A549 (cell line): ENCODE measurements at regions of chr9 and their contacts with region 1.

Region 1: GRCh38 chr9:130866474-130866965 is 30.1 kb downstream of the QRFP start:
- DNase-seq: peak; percentile 79 to 93
- ATAC-seq: peak; percentile 97
- H3K4me3 ChIP-seq: no peak overlapping the region
- H3K27ac ChIP-seq: no peak overlapping the region
- H3K4me1 ChIP-seq: no peaks in the 10 kb centered on the region
- CTCF ChIP-seq: peak; percentile 95
- EP300 ChIP-seq: no peak
- POLR2A ChIP-seq: no peak
- RAD21 ChIP-seq: peak; percentile 76 to 78

Region 2: GRCh38 chr9:130058154-130058553 is 808.4 kb before region 1 on chr9:
- CTCF ChIA-PET with region 1: no interaction called
- POLR2A ChIA-PET with region 1: no interaction called
- DNase-seq: peak; percentile 35 to 71
- ATAC-seq: peak in 1 of 2 experiments; percentile 52; a peak in 3 of 6 replicates
- H3K4me3 ChIP-seq: no peak overlapping the region
- H3K27ac ChIP-seq: no peak overlapping the region
- H3K4me1 ChIP-seq: peaks cover 4% of the 10 kb centered on the region; the same call in 1 of the 3 replicates
- CTCF ChIP-seq: no peak
- EP300 ChIP-seq: no peak
- POLR2A ChIP-seq: no peak
- RAD21 ChIP-seq: no peak

Region 3: GRCh38 chr9:130701056-130702022 is 165.2 kb before region 1 on chr9:
- CTCF ChIA-PET with region 1: interaction called, 176 read pairs
- POLR2A ChIA-PET with region 1: interaction called, 3 read pairs
- DNase-seq: peak; percentile 71 to 74
- ATAC-seq: peak; percentile 94 to 98
- H3K4me3 ChIP-seq: no peak overlapping the region
- H3K27ac ChIP-seq: no peak overlapping the region
- H3K4me1 ChIP-seq: no peaks in the 10 kb centered on the region
- CTCF ChIP-seq: peak; percentile 87
- EP300 ChIP-seq: no peak
- POLR2A ChIP-seq: no peak
- RAD21 ChIP-seq: peak; percentile 50 to 57; a peak in 4 of 5 replicates

Region 4: DNA sequence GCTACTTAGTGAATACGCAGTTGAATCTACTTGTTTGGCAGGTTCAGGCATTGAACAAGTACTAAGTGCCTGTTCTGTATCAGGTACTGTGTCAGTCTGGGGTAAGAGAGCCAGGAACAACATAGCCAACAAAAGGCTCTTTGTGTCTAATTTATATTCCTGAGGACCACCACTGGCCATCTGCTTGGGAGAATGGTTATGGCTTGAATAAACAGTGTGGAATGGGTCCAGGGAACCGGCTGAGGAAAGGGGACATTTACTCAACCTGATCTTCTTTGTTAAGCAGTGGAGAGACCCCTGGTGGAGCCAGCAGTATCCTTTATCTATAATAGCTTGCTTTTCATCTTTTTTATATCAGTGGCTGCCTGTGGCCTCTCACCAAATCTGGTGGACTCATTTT is 134.4 kb before region 1 on chr9:
- CTCF ChIA-PET with region 1: interaction called, 14 read pairs
- POLR2A ChIA-PET with region 1: no interaction called
- DNase-seq: peak in 1 of 2 experiments; percentile 40
- ATAC-seq: peak; percentile 66 to 80; a peak in 5 of 6 replicates
- H3K4me3 ChIP-seq: no peak overlapping the region
- H3K27ac ChIP-seq: peak overlapping the region; percentile 41 to 53; a peak in 1 of 6 replicates
- H3K4me1 ChIP-seq: peaks cover 25% of the 10 kb centered on the region
- CTCF ChIP-seq: peak; percentile 36; the same call in 2 of the 3 replicates
- EP300 ChIP-seq: no peak
- POLR2A ChIP-seq: no peak
- RAD21 ChIP-seq: 0 out of 5 replicates have a peak, but pooled peaks of 1 of the 2 experiments have one; percentile 11

Region 5: GRCh38 chr9:130834371-130835311 is 31.9 kb before region 1 on chr9 and contains the start of gene ABL1:
- CTCF ChIA-PET with region 1: interaction called, 397 read pairs
- POLR2A ChIA-PET with region 1: no interaction called
- DNase-seq: peak; percentile 82 to 85
- ATAC-seq: peak; percentile 84 to 92
- H3K4me3 ChIP-seq: peak within 1 kb of the TSS; percentile 63
- H3K27ac ChIP-seq: peak within 1 kb of the TSS; percentile 94 to 98
- H3K4me1 ChIP-seq: peaks cover 43% of the 10 kb centered on the region
- CTCF ChIP-seq: no peak; the same call in 2 of the 3 replicates
- EP300 ChIP-seq: no peak
- POLR2A ChIP-seq: peak; percentile 15
- RAD21 ChIP-seq: no peak; a peak in 1 of 5 replicates
- polyA plus RNA-seq, gene ABL1: 26.5 and 37.5 TPM in 2 replicates

Region 6: GRCh38 chr9:130927995-130928900 is 61.7 kb after region 1 on chr9:
- CTCF ChIA-PET with region 1: interaction called, 41 read pairs
- POLR2A ChIA-PET with region 1: no interaction called
- DNase-seq: peak; percentile 81 to 83
- ATAC-seq: peak; percentile 60 to 72
- H3K4me3 ChIP-seq: peak overlapping the region; percentile 18; the same call in 2 of the 3 replicates
- H3K27ac ChIP-seq: peak overlapping the region; percentile 82 to 93
- H3K4me1 ChIP-seq: peaks cover 38% of the 10 kb centered on the region
- CTCF ChIP-seq: no peak
- EP300 ChIP-seq: no peak
- POLR2A ChIP-seq: no peak
- RAD21 ChIP-seq: no peak

Region 7: DNA sequence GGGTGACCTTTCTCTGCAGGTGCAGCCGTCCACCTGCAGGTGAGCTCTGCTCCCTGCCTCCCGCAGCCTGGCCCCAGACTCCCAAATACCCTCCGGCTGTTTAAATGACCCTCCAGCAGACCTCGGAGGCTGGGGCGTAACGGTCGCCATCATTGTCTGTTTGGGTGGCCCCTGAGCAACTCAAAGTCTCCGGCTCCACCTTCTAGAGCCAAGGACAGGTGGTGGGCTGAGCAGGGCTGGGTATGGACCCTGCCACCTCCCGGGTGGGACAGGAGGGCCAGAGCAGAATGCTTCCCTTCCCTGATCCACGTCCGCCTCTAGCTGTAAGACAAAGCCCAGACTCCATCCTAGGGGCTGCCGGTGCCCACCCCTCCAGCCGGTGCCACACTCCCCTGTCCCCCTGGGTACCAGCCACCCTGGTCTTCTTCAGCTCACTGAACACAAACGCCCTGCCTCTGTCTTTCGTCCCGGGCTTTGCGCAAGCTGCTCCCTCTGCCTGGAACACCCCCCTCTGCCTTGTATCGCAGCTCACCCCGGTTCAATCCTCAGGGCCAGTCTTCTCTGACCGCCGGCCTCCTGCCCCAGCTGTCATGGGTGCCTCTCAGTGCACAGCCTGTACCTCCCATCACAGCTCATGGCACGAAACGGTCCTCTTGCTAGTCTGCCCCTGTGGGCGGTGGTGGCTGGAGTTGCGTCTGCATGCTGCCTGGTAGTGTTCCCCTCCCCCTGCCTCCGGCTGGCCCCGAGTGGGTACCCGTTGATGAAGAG is 106.8 kb after region 1 on chr9:
- CTCF ChIA-PET with region 1: interaction called, 10 read pairs
- POLR2A ChIA-PET with region 1: no interaction called
- DNase-seq: no peak
- ATAC-seq: peak; percentile 28 to 31
- H3K4me3 ChIP-seq: no peak overlapping the region
- H3K27ac ChIP-seq: no peak overlapping the region
- H3K4me1 ChIP-seq: no peaks in the 10 kb centered on the region
- CTCF ChIP-seq: no peak
- EP300 ChIP-seq: no peak
- POLR2A ChIP-seq: no peak
- RAD21 ChIP-seq: no peak

Region 8: DNA sequence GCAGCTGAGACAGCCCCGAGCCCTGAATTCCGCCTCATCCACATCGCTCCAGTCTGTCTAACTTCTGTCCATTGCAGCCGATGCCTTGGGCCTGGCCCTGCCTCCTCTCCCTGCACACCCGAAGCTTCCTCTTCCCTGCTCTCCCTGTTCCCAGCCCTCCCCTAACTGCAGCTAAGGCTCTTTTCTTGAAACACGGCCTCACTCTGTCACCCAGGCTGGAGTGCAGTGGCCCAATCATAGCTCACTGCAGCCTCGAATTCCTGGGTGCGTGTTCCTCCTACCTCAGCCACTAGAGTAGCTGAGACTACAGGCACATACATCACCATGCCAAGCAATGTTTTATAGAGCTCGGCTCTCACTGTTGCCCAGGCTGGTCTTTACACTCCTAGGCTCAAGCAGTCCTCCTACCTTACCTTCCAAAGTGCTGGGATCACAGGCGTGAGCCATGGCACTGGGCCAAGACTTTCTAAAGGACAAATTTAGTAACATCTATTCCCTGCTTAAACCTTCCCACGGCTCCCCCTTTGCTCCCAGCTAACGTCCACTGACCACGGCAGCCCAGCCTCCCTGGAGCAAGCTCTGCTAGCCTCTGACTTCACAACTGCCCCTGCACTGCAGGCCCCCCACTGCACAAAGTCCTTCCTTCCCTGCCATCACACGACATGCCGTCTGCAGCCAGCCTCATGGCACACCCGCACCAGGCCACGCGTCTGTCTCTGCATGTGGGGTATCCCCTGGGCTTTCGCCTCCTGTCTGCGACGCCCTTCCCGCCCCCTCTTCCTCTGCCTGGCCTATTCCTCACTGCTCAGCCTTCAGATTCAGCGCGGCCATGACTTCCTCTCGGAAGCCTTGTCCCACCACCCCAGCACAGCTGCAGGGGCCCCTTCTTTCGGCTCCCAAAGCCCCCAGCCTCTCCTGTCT is 171.1 kb after region 1 on chr9:
- CTCF ChIA-PET with region 1: interaction called, 12 read pairs
- POLR2A ChIA-PET with region 1: no interaction called
- DNase-seq: no peak
- ATAC-seq: peak; percentile 23 to 59; a peak in 4 of 6 replicates
- H3K4me3 ChIP-seq: no peak overlapping the region
- H3K27ac ChIP-seq: no peak overlapping the region
- H3K4me1 ChIP-seq: no peaks in the 10 kb centered on the region
- CTCF ChIP-seq: no peak
- EP300 ChIP-seq: no peak
- POLR2A ChIP-seq: no peak
- RAD21 ChIP-seq: no peak